ENCODE measurements at regions of chr21 and their contacts with region 1.

Region 1: DNA sequence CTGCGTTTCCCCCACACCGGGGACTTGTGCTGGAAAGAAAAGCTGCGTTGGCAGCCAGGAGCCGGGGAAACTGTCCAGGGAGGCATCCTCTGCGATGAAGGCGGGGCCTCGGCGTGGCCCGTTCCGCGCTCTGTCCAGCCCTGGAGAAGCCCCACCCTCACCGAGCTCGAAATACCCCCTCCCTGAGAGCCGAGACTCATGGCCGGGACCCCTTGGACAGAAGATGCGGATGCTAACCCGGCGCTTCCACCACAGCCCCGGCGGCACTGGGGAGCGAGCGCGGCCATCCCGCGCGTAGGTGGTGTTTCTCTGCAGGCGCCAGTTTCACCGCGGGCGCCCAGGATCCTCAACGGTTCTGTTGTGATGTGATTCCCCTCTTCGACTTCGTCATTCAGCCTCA is 31.6 kb downstream of the PDE9A start:
- DNase-seq: no peak
- ATAC-seq: peak in 1 of 8 donors; percentile 36
- H3K4me3 ChIP-seq: peak overlapping the region in 5 of 10 donors; percentile 7 to 28 (median 17)
- H3K27ac ChIP-seq: no peak overlapping the region
- H3K4me1 ChIP-seq: peaks cover 0 to 16% (median 0%) of the 10 kb centered on the region in 9 donors
- H3K27me3 ChIP-seq: peaks cover 0 to 15% (median 0%) of the 10 kb centered on the region in 7 donors
- CTCF ChIP-seq: no peak

Region 2: GRCh38 chr21:42705746-42706374 is 20.8 kb after region 1 on chr21:
- intact Hi-C with region 1: no loop called
- DNase-seq: no peak
- ATAC-seq: no peak
- H3K4me3 ChIP-seq: no peak overlapping the region
- H3K27ac ChIP-seq: no peak overlapping the region
- H3K4me1 ChIP-seq: no peaks in the 10 kb centered on the region
- H3K27me3 ChIP-seq: peaks cover 0 to 21% (median 0%) of the 10 kb centered on the region in 7 donors
- CTCF ChIP-seq: no peak

Region 3: DNA sequence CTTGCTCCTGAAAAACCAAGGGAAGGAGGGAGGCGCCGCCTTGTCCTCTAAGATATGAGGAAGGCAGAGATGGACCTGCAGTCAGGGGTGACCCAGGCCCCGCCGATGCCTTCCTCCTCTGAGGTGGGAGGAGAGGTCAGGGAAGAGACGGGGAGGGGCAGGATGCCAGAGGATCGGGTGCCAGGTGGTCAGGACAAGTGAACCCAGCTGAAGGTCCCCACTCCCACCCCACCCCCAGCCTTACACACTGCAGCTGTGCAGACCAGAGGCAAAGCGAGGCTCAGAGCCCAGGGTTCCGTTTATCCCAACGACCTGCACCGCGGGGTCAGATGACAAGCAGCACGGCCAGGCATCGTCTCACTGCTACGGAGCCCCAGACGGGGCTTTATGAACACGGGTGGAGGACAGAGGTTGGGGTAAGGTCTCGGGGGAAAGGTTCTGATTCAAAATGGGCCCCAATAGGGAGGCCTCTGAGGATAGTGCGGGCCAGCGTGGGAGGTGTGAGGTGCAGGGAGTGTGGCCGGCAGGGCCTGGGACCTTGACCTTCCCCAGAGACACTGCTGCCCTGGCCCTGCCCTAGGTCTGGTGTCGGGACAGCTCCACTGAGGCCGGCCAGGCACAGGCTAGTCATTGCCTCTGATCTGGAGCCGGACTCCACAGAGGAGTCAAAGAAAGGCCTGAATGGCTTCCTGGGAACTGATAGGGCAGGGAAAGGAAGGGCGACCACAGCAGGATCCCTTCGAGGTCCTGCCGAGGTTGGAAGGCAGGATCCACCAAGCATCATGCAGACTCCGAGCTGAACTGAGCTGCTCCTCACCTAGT is 81.9 kb after region 1 on chr21:
- intact Hi-C with region 1: loop called in 1 of 10 experiments (anchors 5 kb)
- DNase-seq: no peak
- ATAC-seq: peak in 2 of 8 donors; percentile 11 to 44
- H3K4me3 ChIP-seq: no peak overlapping the region
- H3K27ac ChIP-seq: no peak overlapping the region
- H3K4me1 ChIP-seq: no peaks in the 10 kb centered on the region
- H3K27me3 ChIP-seq: peaks cover 0 to 5% (median 0%) of the 10 kb centered on the region in 7 donors
- CTCF ChIP-seq: no peak

Measured in heart right ventricle (tissue), 16 donors.